K562 (cell line): ENCODE measurements at regions of chr1 and their contacts with region 1.

Region 1: DNA sequence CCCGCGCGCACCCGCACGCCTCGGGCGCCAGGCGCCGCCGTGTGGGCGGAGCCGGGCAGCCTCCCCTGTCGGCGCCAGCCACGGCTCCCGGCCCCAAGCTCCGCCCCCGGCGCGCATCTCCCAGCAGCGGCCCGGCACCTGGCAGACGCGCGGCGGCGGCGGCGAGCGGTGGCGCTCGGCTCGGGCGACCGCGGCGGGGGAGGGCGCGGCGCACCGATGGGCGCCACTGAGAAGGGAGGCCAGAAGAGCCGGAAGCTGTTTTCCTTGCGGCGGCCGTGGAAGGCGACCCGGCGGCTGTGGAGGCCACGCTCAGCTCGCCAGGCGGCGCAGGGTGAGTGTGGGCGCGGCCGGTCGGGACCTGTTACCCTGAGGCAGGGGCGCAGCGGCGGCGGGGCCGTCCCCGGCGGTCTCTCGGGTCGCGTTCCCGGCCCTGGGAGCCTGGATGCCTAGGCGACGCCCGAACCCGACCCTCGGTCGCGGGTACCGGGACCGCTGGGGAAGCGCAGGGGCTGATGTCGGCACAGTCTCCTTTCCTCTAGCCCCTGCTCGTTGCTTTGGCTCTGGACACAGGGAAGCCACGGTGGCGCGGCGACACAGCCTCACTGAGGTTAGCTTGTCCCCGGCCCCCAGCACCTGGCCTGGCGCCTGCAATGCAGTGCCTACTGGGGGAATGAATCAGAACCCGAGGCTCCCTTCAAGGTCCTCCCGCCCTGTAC is 54.9 kb upstream of the DNAJC6 start:
- DNase-seq: peak; percentile 93 to 96 (median 94)
- ATAC-seq: peak; percentile 90
- H3K4me3 ChIP-seq: peak overlapping the region; percentile 68
- H3K27ac ChIP-seq: peak overlapping the region; percentile 83
- H3K4me1 ChIP-seq: peaks cover 19 to 23% of the 10 kb centered on the region in 2 experiments
- H3K27me3 ChIP-seq: no peaks in the 10 kb centered on the region
- CTCF ChIP-seq: peak in 2 of 3 experiments; percentile 18 to 29; a peak in 3 of 6 replicates
- EP300 ChIP-seq: no peak; the same call in 1 of the 2 replicates
- POLR2A ChIP-seq: no peak; the same call in 1 of the 2 replicates
- RAD21 ChIP-seq: peak; percentile 37 to 51; a peak in 2 of 4 replicates

Region 2: DNA sequence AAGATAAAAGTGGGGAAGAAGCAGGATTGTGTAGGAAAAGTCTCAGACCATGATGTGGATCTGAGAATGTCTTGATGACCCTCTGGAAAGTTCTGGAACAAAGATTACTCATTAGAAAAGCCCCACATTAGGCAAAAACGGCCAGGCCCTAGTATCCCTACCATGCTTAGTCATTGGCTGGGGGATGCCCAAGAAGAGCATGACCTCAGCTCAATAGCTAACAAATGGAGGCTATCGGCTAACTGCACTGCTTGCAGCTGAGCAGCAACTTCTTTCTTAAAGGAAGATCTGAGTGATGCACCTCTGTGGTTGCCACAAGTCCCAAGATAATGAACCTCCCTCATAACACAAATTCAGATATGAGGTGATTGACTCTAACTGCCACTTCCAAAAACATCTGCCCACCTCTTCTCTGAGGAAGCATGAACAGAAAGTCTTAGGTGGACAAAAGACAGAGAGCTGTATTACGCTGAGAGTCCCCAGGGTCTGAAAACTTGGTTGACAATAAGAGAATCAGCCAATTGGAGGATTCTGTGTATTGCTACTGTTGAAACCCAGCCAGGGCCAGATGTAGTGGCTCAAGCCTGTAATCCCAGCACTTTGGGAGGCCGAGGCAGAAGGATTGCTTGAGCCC is 171.1 kb before region 1 on chr1:
- CTCF ChIA-PET with region 1: no interaction called
- POLR2A ChIA-PET with region 1: no interaction called
- in situ Hi-C with region 1: no loop called
- intact Hi-C with region 1: no loop called
- DNase-seq: peak in 3 of 4 experiments; percentile 8 to 72 (median 49)
- ATAC-seq: peak; percentile 95
- H3K4me3 ChIP-seq: no peak overlapping the region
- H3K27ac ChIP-seq: peak overlapping the region; percentile 38; the same call in 2 of the 3 replicates
- H3K4me1 ChIP-seq: peaks cover 5 to 10% of the 10 kb centered on the region in 2 experiments; a peak in 3 of 5 replicates
- H3K27me3 ChIP-seq: no peaks in the 10 kb centered on the region
- CTCF ChIP-seq: no peak
- EP300 ChIP-seq: peak; percentile 70; the same call in 1 of the 2 replicates
- POLR2A ChIP-seq: no peak
- RAD21 ChIP-seq: no peak

Region 3: GRCh38 chr1:65221638-65222339 is 32.7 kb before region 1 on chr1:
- CTCF ChIA-PET with region 1: no interaction called
- POLR2A ChIA-PET with region 1: no interaction called
- in situ Hi-C with region 1: no loop called
- intact Hi-C with region 1: no loop called
- DNase-seq: no peak
- ATAC-seq: peak; percentile 46
- H3K4me3 ChIP-seq: no peak overlapping the region
- H3K27ac ChIP-seq: peak overlapping the region; percentile 41; the same call in 1 of the 3 replicates
- H3K4me1 ChIP-seq: peaks cover 15 to 33% of the 10 kb centered on the region in 2 experiments
- H3K27me3 ChIP-seq: no peaks in the 10 kb centered on the region
- CTCF ChIP-seq: no peak
- EP300 ChIP-seq: no peak
- POLR2A ChIP-seq: no peak
- RAD21 ChIP-seq: no peak

Region 4: GRCh38 chr1:65278376-65279069 is 24.0 kb after region 1 on chr1:
- CTCF ChIA-PET with region 1: no interaction called
- POLR2A ChIA-PET with region 1: interaction called, 7 read pairs
- in situ Hi-C with region 1: no loop called
- intact Hi-C with region 1: loop called (anchors 2 kb)
- DNase-seq: no peak
- ATAC-seq: no peak
- H3K4me3 ChIP-seq: no peak overlapping the region
- H3K27ac ChIP-seq: peak overlapping the region; percentile 62
- H3K4me1 ChIP-seq: peaks cover 15 to 53% of the 10 kb centered on the region in 2 experiments
- H3K27me3 ChIP-seq: no peaks in the 10 kb centered on the region
- CTCF ChIP-seq: no peak
- EP300 ChIP-seq: no peak
- POLR2A ChIP-seq: no peak
- RAD21 ChIP-seq: no peak